Gastrocnemius medialis (tissue), 4 donors: ENCODE measurements at regions of chr1 and their contacts with region 1.

Region 1: GRCh38 chr1:95023399-95024043 is 49.2 kb downstream of the ALG14 start:
- DNase-seq: no peak
- ATAC-seq: no peak
- H3K4me3 ChIP-seq: no peak overlapping the region
- H3K27ac ChIP-seq: peak overlapping the region in 1 of 4 donors; percentile 34
- H3K4me1 ChIP-seq: peaks cover 0 to 9% of the 10 kb centered on the region in 2 donors
- H3K27me3 ChIP-seq: no peaks in the 10 kb centered on the region
- CTCF ChIP-seq: no peak
- POLR2A ChIP-seq: no peak

Region 2: DNA sequence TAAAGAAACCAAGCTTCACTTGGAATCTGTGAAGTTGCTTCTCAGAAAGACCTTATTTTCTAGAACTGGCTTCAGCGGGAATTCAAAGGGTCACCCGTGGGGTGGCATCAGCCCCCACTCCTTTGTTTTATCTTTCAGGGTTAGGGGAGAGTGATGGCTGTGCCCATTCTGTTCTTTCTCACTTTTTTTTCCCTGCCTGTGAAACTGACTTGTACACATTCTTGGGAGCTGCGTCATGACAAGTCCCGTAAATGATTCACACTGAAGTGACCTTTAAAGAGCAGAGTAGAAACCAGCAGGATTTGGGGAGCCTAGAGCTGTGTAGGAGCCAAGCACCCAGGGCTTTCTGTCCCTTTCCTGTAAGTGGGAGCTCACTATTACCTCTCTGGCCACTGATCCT is 159.6 kb before region 1 on chr1:
- in situ Hi-C with region 1: no loop called
- intact Hi-C with region 1: loop called (anchors 5 kb)
- DNase-seq: peak in 1 of 2 donors; percentile 31
- ATAC-seq: peak; percentile 71 to 81
- H3K4me3 ChIP-seq: peak overlapping the region in 1 of 4 donors; percentile 22
- H3K27ac ChIP-seq: peak overlapping the region; percentile 63 to 74 (median 65)
- H3K4me1 ChIP-seq: peaks cover 13 to 19% of the 10 kb centered on the region in 2 donors
- H3K27me3 ChIP-seq: peaks cover 0 to 3% (median 0%) of the 10 kb centered on the region in 3 donors
- CTCF ChIP-seq: no peak
- POLR2A ChIP-seq: no peak

Region 3: GRCh38 chr1:94926915-94927404 is 96.6 kb before region 1 on chr1 and contains the start of gene CNN3:
- in situ Hi-C with region 1: no loop called
- intact Hi-C with region 1: loop called (anchors 10 kb)
- DNase-seq: peak; percentile 65 to 73
- ATAC-seq: peak; percentile 69 to 73
- H3K4me3 ChIP-seq: peak within 1 kb of the TSS; percentile 57 to 71 (median 70)
- H3K27ac ChIP-seq: peak within 1 kb of the TSS; percentile 81 to 88 (median 84)
- H3K4me1 ChIP-seq: peaks cover 19 to 20% of the 10 kb centered on the region in 2 donors
- H3K27me3 ChIP-seq: peaks cover 45 to 47% (median 46%) of the 10 kb centered on the region in 3 donors
- CTCF ChIP-seq: no peak
- POLR2A ChIP-seq: peak; percentile 73 to 89
- total RNA-seq, gene CNN3: 11.9 to 21.8 (median 16.1) TPM

Region 4: DNA sequence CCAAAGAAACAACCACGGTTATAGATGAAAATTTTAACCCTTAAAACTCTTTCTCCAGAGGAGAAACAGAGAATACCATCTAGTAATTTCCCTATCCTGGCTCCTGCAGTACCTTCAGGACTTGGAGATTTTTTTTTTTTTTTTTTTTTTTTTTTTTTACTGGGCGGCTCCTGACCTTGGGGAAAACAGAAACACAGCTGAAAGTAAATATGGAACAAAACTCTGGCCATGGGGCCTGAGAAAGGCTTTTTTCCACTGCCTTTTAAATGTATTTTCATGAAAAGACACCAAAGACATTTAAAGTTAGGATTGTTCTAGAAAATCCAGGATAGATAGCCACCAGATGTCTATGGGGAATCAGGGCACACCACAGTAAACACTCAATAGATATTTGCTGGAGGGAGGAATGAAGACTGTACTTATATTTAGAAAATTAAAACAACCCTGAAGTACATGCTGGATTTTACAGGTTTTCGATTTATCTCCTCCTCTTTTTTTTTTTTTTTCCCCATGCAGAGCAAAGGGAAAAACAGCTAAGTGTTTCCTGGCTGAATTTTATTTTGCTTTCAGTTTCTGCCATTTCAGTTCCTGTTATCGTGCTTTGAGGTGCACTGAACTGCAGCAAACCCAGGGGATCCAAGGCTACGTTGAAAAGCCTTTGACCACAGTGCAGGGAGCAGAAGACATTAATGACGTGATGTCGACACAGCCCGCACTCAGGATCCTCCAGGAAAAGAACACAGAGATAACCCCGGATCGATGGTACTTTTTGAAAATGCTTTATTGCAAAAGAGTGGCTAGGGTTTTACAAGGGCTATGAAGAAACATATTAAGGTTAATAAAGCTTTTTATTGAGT is 60.9 kb before region 1 on chr1:
- in situ Hi-C with region 1: no loop called
- intact Hi-C with region 1: loop called (anchors 5 kb)
- DNase-seq: no peak
- ATAC-seq: peak; percentile 61 to 65
- H3K4me3 ChIP-seq: peak overlapping the region; percentile 7 to 44 (median 38)
- H3K27ac ChIP-seq: peak overlapping the region; percentile 53 to 74 (median 66)
- H3K4me1 ChIP-seq: peaks cover 4 to 5% of the 10 kb centered on the region in 2 donors
- H3K27me3 ChIP-seq: no peaks in the 10 kb centered on the region
- CTCF ChIP-seq: no peak
- POLR2A ChIP-seq: no peak

Region 5: GRCh38 chr1:94983171-94983739 is 40.3 kb before region 1 on chr1:
- in situ Hi-C with region 1: no loop called
- intact Hi-C with region 1: loop called (anchors 5 kb)
- DNase-seq: peak in 1 of 2 donors; percentile 18
- ATAC-seq: peak; percentile 60 to 68
- H3K4me3 ChIP-seq: no peak overlapping the region
- H3K27ac ChIP-seq: peak overlapping the region in 2 of 4 donors; percentile 43 to 52
- H3K4me1 ChIP-seq: peaks cover 0 to 21% of the 10 kb centered on the region in 2 donors
- H3K27me3 ChIP-seq: no peaks in the 10 kb centered on the region
- CTCF ChIP-seq: no peak
- POLR2A ChIP-seq: no peak

Region 6: GRCh38 chr1:95067062-95067461 is 43.5 kb after region 1 on chr1:
- in situ Hi-C with region 1: no loop called
- intact Hi-C with region 1: no loop called
- DNase-seq: no peak
- ATAC-seq: no peak
- H3K4me3 ChIP-seq: no peak overlapping the region
- H3K27ac ChIP-seq: no peak overlapping the region
- H3K4me1 ChIP-seq: peaks cover 5 to 6% of the 10 kb centered on the region in 2 donors
- H3K27me3 ChIP-seq: no peaks in the 10 kb centered on the region
- CTCF ChIP-seq: no peak
- POLR2A ChIP-seq: no peak